Heart left ventricle (tissue), 16 donors: ENCODE measurements at regions of chr15 and their contacts with region 1.

Region 1: DNA sequence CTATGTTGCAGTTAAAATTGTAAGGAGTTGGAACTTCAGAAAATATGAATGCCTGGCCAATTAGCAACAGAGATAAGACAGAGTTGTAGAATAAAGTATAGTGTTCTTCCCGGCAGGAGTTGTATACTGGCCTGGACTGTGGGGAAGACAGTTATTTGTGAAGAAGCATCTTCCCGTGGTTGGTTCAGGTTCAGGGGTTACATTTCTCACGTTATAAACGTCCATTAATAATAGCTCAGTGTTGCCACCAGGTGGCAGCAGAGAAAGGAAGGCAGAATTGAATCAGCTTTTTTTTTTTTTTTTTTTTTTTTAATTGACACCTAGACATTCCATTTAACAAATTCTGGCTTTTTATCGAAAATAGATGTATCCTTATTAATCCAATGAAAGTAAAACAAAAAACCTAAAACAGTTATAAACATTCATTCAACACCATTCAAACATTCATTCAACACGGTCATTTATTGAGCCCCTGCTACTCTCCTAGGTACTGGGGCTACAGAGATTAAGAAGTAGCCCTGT is 66.4 kb upstream of the NR2E3 start:
- DNase-seq: peak in 4 of 5 donors; percentile 35 to 63 (median 46)
- ATAC-seq: peak in 3 of 4 donors; percentile 25 to 44 (median 38)
- H3K4me3 ChIP-seq: no peak overlapping the region
- H3K27ac ChIP-seq: no peak overlapping the region
- H3K4me1 ChIP-seq: peaks cover 0 to 6% (median 0%) of the 10 kb centered on the region in 12 donors
- H3K27me3 ChIP-seq: no peaks in the 10 kb centered on the region
- CTCF ChIP-seq: peak; percentile 69 to 86 (median 80)
- POLR2A ChIP-seq: no peak

Region 2: GRCh38 chr15:71800835-71801745 is 57.2 kb after region 1 on chr15:
- intact Hi-C with region 1: loop called in 9 of 10 experiments (anchors 1 to 10 kb)
- DNase-seq: no peak
- ATAC-seq: peak; percentile 57 to 84 (median 82)
- H3K4me3 ChIP-seq: no peak overlapping the region
- H3K27ac ChIP-seq: no peak overlapping the region
- H3K4me1 ChIP-seq: peaks cover 0 to 8% (median 2%) of the 10 kb centered on the region in 12 donors
- H3K27me3 ChIP-seq: no peaks in the 10 kb centered on the region
- CTCF ChIP-seq: peak; percentile 72 to 91 (median 84)
- POLR2A ChIP-seq: no peak